BJ (cell line): ENCODE measurements at regions of chr2 and their contacts with region 1.

Region 1: DNA sequence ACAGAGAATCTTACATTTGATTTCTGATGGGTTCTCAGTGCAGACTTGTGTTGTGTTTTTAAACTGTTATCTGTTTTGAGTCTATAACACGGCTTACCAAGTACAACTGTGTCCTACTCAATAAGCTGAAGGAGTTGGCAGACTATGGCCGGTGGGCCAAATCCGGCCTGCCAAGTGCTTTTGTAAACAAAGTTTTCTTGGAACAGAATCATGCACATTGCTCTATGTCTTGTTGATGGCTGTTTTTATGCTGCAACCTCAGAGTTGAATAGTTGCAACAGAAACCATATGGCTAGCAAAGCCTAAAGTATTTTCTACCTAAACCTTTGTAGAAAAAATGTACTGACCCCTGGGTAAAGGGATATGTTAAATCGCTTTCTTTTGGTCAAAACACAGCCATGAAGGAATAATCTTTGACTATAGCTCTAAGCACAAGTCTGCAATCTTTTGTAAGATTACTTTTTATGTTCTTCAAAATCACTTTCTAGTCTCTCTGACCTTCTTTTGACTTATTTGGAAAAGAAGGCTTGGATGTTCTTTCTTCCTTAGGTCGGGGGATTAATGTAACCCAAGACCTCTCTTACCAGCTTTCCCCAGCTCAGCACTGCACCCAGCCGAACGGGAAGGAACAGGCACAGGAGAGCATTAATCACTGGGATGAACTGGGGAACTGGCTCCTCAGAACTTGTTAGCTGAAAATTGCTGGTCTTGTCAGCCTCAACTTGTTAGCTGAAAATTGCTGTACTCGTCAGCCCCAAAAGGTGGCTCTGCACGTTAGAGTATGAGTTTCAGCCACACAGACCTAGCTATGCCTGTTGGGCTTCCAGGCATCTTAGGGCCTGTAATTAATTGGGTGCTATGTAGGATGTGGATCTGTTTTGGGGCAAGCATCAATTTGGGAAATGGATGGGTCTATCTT is 75.4 kb downstream of the CD8B2 start:
- DNase-seq: no peak
- H3K4me3 ChIP-seq: no peak overlapping the region
- H3K27me3 ChIP-seq: no peaks in the 10 kb centered on the region
- CTCF ChIP-seq: no peak

Region 2: DNA sequence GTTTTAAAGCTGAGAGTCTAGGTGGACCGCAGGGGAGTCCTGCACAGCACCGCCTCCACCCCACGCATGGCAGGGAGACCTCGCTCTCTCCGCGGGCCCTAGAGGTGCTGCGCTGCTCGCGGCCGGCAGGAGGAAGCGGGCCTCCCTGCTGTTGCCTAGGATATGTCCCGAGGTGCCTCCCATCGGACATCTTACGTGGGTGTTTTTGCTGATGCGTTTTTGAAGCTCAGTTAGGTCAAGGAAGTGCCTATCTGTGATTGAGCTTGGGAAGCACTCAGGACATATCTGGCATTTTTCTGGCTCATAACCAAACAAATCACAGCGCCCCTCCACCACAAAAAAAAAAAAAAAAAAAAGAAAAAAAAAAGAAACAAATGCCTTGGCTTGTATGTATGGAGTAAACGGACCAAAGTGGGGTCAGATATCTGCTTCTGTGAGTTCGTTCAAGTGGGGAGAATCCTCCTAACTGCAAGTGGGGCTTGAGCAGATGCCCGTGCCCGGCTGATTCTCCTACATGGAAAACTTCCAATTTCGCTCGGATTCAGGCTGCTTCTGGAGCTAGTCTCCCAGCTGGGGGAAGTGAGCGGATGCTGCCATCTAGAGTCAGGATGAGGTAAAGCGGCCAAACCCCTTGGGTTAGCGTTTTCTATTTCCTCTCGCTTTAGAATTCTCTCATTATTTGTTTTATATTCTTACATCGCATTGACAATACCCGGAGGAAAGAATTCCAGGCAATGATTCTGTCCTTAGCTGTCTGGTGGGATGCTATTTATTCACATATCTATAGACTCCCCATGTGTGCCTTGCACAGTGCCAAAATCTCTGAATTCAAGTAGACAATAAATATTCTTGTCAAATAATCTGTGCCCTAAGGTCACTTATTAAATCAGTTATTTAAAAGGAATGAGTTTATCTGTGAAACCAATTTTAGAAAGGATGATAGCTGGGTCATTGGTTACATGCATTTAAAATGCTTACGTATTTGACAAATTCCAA is 19.9 kb after region 1 on chr2:
- CTCF ChIA-PET with region 1: interaction called, 11 read pairs
- POLR2A ChIA-PET with region 1: no interaction called
- DNase-seq: peak; percentile 18
- H3K4me3 ChIP-seq: peak overlapping the region; percentile 17
- H3K27me3 ChIP-seq: 0 out of 2 replicates have a peak, but pooled peaks cover 4% of the 10 kb centered on the region
- CTCF ChIP-seq: peak; percentile 94